Endothelial cell of umbilical vein (primary cell): ENCODE measurements at regions of chr5 and their contacts with region 1.

Region 1: GRCh38 chr5:108451269-108451668 is 69.4 kb upstream of the FBXL17 start:
- DNase-seq: no peak
- H3K4me3 ChIP-seq: no peak overlapping the region
- H3K27ac ChIP-seq: no peak overlapping the region
- H3K4me1 ChIP-seq: no peaks in the 10 kb centered on the region
- H3K27me3 ChIP-seq: no peaks in the 10 kb centered on the region
- CTCF ChIP-seq: no peak
- POLR2A ChIP-seq: no peak

Region 2: GRCh38 chr5:108481355-108481931 is 30.2 kb after region 1 on chr5:
- CTCF ChIA-PET with region 1: no interaction called
- POLR2A ChIA-PET with region 1: no interaction called
- dilution Hi-C with region 1: no loop called
- intact Hi-C with region 1: loop called (anchors 1 kb)
- DNase-seq: peak; percentile 26
- H3K4me3 ChIP-seq: no peak overlapping the region
- H3K27ac ChIP-seq: no peak overlapping the region
- H3K4me1 ChIP-seq: no peaks in the 10 kb centered on the region
- H3K27me3 ChIP-seq: no peaks in the 10 kb centered on the region
- CTCF ChIP-seq: peak in 1 of 2 donors; percentile 16
- POLR2A ChIP-seq: no peak

Region 3: DNA sequence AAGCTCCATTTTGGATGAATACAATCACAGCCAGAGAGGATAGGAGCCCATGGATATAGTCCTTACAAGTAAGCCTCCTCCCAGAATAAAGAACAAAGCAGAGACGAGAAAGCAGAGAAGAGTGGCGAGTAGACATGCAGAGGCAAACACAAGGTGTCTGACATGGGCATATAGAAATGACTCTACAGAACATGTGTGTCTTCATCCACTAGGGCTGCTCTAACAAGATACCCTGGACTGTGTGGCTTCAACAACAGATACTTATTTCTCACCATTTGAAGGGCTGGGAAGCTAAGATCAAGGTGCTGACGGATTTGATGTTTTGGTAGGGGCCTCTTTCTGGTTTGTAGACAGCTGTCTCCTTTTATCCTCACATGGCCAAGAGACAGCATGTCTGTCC is 264.1 kb after region 1 on chr5:
- CTCF ChIA-PET with region 1: no interaction called
- POLR2A ChIA-PET with region 1: no interaction called
- dilution Hi-C with region 1: no loop called
- intact Hi-C with region 1: no loop called
- DNase-seq: no peak
- H3K4me3 ChIP-seq: no peak overlapping the region
- H3K27ac ChIP-seq: no peak overlapping the region
- H3K4me1 ChIP-seq: no peaks in the 10 kb centered on the region
- H3K27me3 ChIP-seq: no peaks in the 10 kb centered on the region
- CTCF ChIP-seq: no peak
- POLR2A ChIP-seq: no peak